ENCODE measurements at regions of chr17 and their contacts with region 1.

Region 1: GRCh38 chr17:8954339-8954738 is 11.2 kb downstream of the PIK3R5 start:
- DNase-seq: peak; percentile 58
- H3K4me3 Mint-ChIP-seq: peak overlapping the region; percentile 60
- H3K27ac Mint-ChIP-seq: peak overlapping the region; percentile 80
- H3K4me1 Mint-ChIP-seq: peaks cover 86% of the 10 kb centered on the region
- H3K27me3 Mint-ChIP-seq: no peaks in the 10 kb centered on the region

Region 2: DNA sequence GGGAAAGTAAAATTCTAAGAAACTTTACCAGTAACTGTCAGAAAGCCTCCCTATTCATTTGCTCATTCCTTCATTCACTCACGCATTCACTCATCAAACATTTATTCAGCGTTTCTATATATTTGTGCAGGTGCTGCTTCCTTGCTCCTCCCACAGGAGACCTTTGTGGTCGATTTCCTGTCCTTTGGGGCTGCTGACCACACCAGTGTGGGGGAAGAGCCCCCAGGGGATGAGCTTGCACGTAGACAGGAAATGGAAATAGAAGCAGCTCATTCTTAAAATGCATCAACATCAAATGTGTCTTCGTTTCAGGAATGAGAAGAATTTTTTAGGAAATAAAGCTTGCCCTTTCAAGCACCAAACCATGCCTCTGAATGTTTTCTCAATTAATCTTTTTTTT is 96.4 kb before region 1 on chr17:
- intact Hi-C with region 1: loop called (anchors 2 kb)
- DNase-seq: peak; percentile 55
- H3K4me3 Mint-ChIP-seq: peak overlapping the region; percentile 75
- H3K27ac Mint-ChIP-seq: peak overlapping the region; percentile 95
- H3K4me1 Mint-ChIP-seq: peaks cover 58% of the 10 kb centered on the region
- H3K27me3 Mint-ChIP-seq: no peaks in the 10 kb centered on the region

Region 3: GRCh38 chr17:8900626-8901585 is 53.4 kb before region 1 on chr17:
- intact Hi-C with region 1: loop called (anchors 1 kb)
- DNase-seq: no peak
- H3K4me3 Mint-ChIP-seq: peak overlapping the region; percentile 27
- H3K27ac Mint-ChIP-seq: peak overlapping the region; percentile 91
- H3K4me1 Mint-ChIP-seq: peaks cover 64% of the 10 kb centered on the region
- H3K27me3 Mint-ChIP-seq: no peaks in the 10 kb centered on the region

Region 4: DNA sequence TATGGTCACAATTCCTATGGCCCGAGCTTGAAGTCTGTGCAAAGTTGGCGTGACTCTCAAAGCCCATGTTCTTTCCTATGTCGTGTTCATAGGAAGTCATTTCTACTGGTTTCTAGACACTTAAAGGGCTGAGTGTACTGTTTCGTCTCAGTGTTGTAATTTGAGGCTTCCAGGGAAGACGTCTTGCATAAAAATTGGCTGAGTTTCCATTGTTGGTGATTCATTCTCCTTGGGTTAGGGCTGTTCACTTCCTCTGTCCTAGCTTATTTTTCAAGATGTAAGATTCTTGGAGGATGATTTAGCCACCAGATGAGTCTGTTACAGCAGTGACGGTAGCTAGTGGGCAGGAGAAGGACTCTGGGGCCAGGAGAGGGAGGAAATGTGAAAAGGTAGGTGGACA is 31.9 kb before region 1 on chr17:
- intact Hi-C with region 1: loop called (anchors 1 kb)
- DNase-seq: no peak
- H3K4me3 Mint-ChIP-seq: peak overlapping the region; percentile 34
- H3K27ac Mint-ChIP-seq: peak overlapping the region; percentile 95
- H3K4me1 Mint-ChIP-seq: peaks cover 26% of the 10 kb centered on the region
- H3K27me3 Mint-ChIP-seq: no peaks in the 10 kb centered on the region

Region 5: GRCh38 chr17:8941520-8941919 is 12.8 kb before region 1 on chr17:
- intact Hi-C with region 1: loop called (anchors 1 kb)
- DNase-seq: peak; percentile 57
- H3K4me3 Mint-ChIP-seq: peak overlapping the region; percentile 59
- H3K27ac Mint-ChIP-seq: peak overlapping the region; percentile 95
- H3K4me1 Mint-ChIP-seq: peaks cover 60% of the 10 kb centered on the region
- H3K27me3 Mint-ChIP-seq: no peaks in the 10 kb centered on the region

Region 6: DNA sequence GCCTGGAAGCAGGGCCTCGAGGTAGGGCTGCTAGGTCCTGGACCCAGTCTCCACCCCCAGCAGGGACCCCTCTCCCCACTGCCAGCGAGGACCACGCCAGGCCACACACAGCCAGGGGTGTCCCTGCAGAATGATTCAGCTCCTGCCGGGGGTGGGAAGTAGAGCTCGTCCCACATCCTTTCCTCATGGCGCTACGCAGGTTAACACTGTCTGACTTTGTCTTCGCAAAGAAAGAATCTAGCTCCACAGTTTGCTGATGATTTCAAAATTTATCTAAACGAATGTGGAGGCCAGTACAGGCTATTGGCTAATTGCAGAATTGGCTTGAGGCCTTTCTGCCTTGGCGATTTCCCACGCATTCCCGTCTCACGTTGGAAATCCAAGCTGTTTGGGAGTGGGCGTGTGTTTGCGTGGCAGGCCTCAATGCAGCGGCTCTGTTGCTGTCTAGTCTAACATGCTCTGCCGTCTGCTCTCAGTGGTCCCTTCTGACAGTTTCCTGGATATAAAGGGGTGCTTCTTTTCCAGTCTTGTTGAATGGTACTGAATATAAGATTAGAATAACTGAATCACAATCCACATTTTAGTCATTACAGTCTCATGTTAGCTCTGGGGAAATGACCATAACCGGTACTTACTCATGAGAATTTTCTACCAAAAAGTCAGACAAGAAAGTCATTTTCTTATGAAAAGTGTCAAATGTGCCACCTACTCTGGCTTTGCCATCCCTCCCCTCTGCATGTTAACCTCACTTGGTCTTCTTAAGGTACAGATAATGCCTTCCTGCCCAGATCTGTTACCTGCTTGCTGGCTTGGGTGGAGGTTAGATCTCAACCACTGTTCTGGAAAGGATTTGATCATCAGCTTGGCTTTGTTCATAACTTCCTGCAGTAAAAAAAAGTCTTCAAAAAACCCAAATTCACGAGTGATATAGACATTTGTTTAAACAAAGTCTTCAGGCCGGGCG is 319.4 kb after region 1 on chr17:
- intact Hi-C with region 1: loop called (anchors 10 kb)
- DNase-seq: no peak
- H3K4me3 Mint-ChIP-seq: peak overlapping the region; percentile 18
- H3K27ac Mint-ChIP-seq: peak overlapping the region; percentile 72
- H3K4me1 Mint-ChIP-seq: peaks cover 18% of the 10 kb centered on the region
- H3K27me3 Mint-ChIP-seq: no peaks in the 10 kb centered on the region